ENCODE measurements at regions of chr2 and their contacts with region 1.

Region 1: GRCh38 chr2:38572167-38572566 is 30.6 kb downstream of the HNRNPLL start:
- DNase-seq: no peak
- ATAC-seq: no peak
- H3K4me3 ChIP-seq: no peak overlapping the region
- H3K27ac ChIP-seq: no peak overlapping the region
- H3K4me1 ChIP-seq: no peaks in the 10 kb centered on the region
- H3K27me3 ChIP-seq: no peaks in the 10 kb centered on the region
- CTCF ChIP-seq: no peak

Region 2: GRCh38 chr2:38549071-38549704 is 23.0 kb before region 1 on chr2:
- CTCF ChIA-PET with region 1: no interaction called
- POLR2A ChIA-PET with region 1: no interaction called
- intact Hi-C with region 1: loop called (anchors 2 kb)
- DNase-seq: no peak
- ATAC-seq: no peak
- H3K4me3 ChIP-seq: no peak overlapping the region
- H3K27ac ChIP-seq: no peak overlapping the region
- H3K4me1 ChIP-seq: no peaks in the 10 kb centered on the region
- H3K27me3 ChIP-seq: no peaks in the 10 kb centered on the region
- CTCF ChIP-seq: no peak

Measured in PC-3 (cell line).